ENCODE measurements at regions of chr4 and their contacts with region 1.

Region 1: DNA sequence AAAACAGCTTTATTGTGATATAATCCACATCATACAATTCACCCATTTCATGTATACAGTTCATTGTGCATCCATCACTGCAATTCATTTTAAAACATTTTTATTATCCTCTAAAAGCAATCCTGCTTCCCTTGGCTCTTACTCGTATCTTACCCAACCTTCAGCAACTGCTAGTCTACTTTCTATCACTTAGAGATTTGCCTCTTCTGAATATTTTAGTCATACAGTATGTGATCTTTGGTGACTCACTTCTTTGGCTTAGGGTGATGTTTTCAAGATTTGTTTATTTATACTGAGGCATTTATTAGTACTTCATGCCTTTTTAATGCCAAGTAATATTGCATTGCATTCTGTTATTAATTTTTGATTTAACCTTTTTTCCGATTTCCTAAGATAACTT is 15.0 kb upstream of the MSMO1 start:
- DNase-seq: no peak
- H3K4me3 Mint-ChIP-seq: no peak overlapping the region
- H3K27ac Mint-ChIP-seq: no peak overlapping the region
- H3K4me1 Mint-ChIP-seq: peaks cover 13% of the 10 kb centered on the region
- H3K27me3 Mint-ChIP-seq: no peaks in the 10 kb centered on the region

Region 2: GRCh38 chr4:165301833-165302232 is 10.7 kb before region 1 on chr4:
- intact Hi-C with region 1: loop called (anchors 1 kb)
- DNase-seq: peak; percentile 79
- H3K4me3 Mint-ChIP-seq: peak overlapping the region; percentile 75
- H3K27ac Mint-ChIP-seq: peak overlapping the region; percentile 74
- H3K4me1 Mint-ChIP-seq: peaks cover 23% of the 10 kb centered on the region
- H3K27me3 Mint-ChIP-seq: no peaks in the 10 kb centered on the region

Measured in activated CD4-positive, alpha-beta T cell treated with anti-CD3 and anti-CD28 coated beads, Interleukin-2, amount 10 ng/mL, durations not matched to agents 24 days and 14 days (primary cell).